ENCODE measurements at regions of chrX and their contacts with region 1.

Region 1: GRCh38 chrX:14029425-14030173 is at the start of gene GEMIN8:
- DNase-seq: peak; percentile 81
- H3K4me3 Mint-ChIP-seq: peak within 1 kb of the TSS; percentile 99
- H3K27ac Mint-ChIP-seq: peak within 1 kb of the TSS; percentile 100
- H3K4me1 Mint-ChIP-seq: peaks cover 37% of the 10 kb centered on the region
- H3K27me3 Mint-ChIP-seq: no peaks in the 10 kb centered on the region
- total RNA-seq, gene GEMIN8: 15.6 and 17.7 TPM in 2 replicates

Region 2: DNA sequence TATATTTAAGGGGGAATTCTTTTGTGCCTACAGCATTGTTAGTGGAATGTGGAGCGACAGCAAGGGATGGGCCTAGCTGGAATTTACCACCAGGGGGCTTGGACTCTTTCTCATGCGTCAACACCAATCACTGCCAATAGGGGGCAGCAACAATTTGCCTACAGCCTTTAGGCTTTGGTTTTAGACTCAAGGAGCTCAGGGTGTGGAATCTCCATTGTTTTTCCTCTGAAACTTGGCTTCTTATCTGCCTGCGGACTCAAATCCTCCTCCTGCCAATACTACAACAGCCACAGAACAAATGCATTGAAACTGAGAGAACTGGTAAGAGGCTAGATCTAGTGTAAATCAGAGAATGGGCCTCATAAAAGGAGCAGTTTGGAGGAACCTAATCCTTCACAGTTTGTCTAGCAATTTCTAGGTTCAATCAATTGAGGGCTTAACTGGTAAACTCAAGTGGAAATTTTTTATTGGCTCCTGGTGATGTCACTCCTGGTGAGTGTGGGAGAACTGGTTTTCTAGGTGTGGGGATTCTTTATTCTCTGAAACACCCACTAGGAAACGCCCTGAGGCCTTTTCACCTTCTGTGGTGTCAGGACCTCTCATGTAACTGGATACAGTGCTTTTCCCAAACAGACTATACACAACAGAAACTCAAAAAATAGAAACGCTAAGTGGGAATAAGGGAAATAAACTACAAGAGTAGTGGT is 1082.6 kb before region 1 on chrX:
- intact Hi-C with region 1: loop called (anchors 5 kb)
- DNase-seq: peak; percentile 65
- H3K4me3 Mint-ChIP-seq: peak overlapping the region; percentile 49
- H3K27ac Mint-ChIP-seq: peak overlapping the region; percentile 95
- H3K4me1 Mint-ChIP-seq: peaks cover 60% of the 10 kb centered on the region
- H3K27me3 Mint-ChIP-seq: no peaks in the 10 kb centered on the region

Region 3: DNA sequence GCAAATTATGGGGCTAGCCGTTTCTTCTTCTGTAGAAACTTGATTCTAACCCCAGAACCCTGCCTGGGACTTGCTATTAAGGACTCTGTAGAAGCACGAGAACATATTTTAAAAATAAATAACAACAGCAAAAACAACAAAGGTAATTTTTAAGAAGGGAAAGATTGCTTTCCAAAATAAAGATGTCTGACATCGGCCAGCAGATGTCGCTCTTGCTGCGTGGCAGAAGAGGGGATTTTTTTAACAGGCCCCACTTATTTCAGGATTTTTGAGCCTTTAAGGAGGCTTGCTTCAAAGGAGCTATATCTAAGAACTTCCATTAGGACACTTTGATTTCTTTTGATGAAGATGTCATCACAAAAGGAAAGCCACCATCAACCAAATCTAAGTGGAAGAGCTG is 523.0 kb before region 1 on chrX:
- intact Hi-C with region 1: loop called (anchors 1 kb)
- DNase-seq: peak; percentile 2
- H3K4me3 Mint-ChIP-seq: no peak overlapping the region
- H3K27ac Mint-ChIP-seq: no peak overlapping the region
- H3K4me1 Mint-ChIP-seq: peaks cover 9% of the 10 kb centered on the region
- H3K27me3 Mint-ChIP-seq: no peaks in the 10 kb centered on the region

Region 4: GRCh38 chrX:13669246-13669737 is 360.3 kb before region 1 on chrX:
- intact Hi-C with region 1: loop called (anchors 1 kb)
- DNase-seq: peak; percentile 29
- H3K4me3 Mint-ChIP-seq: peak overlapping the region; percentile 47
- H3K27ac Mint-ChIP-seq: peak overlapping the region; percentile 90
- H3K4me1 Mint-ChIP-seq: peaks cover 13% of the 10 kb centered on the region
- H3K27me3 Mint-ChIP-seq: no peaks in the 10 kb centered on the region

Region 5: DNA sequence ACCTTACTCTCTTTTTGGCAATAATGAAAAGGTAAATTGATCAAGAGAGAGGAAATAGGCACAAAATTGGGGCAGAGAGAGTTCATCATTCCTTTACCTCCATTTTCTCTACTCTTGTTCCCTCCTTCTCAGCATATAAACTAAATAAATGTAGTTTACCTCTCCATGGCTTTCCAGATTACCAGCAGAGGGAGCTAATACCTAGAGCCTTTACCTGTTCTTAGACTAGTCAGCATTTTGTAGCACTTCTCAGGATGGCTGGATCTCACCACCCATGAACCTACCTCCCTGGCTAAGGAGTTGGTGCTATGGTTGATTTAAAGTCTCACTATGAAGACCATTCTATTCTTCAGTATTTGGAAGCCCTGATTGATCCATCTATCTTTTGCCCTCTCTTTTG is 279.4 kb before region 1 on chrX:
- intact Hi-C with region 1: loop called (anchors 1 kb)
- DNase-seq: no peak
- H3K4me3 Mint-ChIP-seq: no peak overlapping the region
- H3K27ac Mint-ChIP-seq: no peak overlapping the region
- H3K4me1 Mint-ChIP-seq: peaks cover 29% of the 10 kb centered on the region
- H3K27me3 Mint-ChIP-seq: no peaks in the 10 kb centered on the region

Region 6: DNA sequence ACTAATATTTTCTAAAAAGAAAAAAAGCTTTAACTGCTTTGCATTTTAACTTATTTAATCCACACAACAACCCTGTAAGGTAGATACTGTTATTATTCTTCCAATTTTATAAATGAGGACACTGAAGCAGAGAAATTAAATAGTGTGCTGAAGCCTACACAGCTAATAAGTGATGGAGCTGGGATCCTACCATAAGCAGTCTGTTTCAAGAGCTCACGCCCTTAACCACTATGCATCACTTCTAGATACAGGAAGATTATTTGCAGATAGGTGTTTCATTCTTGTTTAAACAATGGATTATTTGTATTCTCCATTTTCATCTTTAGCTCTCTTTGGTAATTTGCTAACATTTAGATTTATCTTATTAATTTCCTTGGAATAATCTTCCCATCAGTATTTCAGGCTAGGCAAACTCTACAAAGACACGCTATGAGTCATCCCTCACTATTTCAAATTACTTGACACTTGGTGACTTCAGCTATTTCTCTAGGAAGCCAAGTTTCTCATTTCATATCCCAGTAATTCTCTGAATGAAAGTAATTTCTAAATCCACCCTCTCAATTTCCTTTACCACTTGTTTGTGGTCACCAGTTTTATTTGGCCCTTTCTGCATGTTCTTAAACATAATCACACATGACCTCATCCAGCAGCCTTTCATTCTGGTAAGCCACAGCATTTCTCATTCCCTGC is 1173.0 kb after region 1 on chrX:
- intact Hi-C with region 1: loop called (anchors 1 kb)
- DNase-seq: no peak
- H3K4me3 Mint-ChIP-seq: no peak overlapping the region
- H3K27ac Mint-ChIP-seq: peak overlapping the region; percentile 76
- H3K4me1 Mint-ChIP-seq: peaks cover 35% of the 10 kb centered on the region
- H3K27me3 Mint-ChIP-seq: peaks cover 9% of the 10 kb centered on the region

Measured in activated T-helper 1 cell treated with anti-CD3 and anti-CD28 coated beads, Interleukin-12 subunit alpha, Interleukin-12 subunit beta, Interleukin-2, Interleukin-4 antibody, amounts not matched to agents 30 ng/mL and 10 ng/mL and 1 ng/mL, durations not matched to agents 14 hours and 24 hours and 36 hours (primary cell).